ENCODE measurements at regions of chr1 and their contacts with region 1.

Region 1: DNA sequence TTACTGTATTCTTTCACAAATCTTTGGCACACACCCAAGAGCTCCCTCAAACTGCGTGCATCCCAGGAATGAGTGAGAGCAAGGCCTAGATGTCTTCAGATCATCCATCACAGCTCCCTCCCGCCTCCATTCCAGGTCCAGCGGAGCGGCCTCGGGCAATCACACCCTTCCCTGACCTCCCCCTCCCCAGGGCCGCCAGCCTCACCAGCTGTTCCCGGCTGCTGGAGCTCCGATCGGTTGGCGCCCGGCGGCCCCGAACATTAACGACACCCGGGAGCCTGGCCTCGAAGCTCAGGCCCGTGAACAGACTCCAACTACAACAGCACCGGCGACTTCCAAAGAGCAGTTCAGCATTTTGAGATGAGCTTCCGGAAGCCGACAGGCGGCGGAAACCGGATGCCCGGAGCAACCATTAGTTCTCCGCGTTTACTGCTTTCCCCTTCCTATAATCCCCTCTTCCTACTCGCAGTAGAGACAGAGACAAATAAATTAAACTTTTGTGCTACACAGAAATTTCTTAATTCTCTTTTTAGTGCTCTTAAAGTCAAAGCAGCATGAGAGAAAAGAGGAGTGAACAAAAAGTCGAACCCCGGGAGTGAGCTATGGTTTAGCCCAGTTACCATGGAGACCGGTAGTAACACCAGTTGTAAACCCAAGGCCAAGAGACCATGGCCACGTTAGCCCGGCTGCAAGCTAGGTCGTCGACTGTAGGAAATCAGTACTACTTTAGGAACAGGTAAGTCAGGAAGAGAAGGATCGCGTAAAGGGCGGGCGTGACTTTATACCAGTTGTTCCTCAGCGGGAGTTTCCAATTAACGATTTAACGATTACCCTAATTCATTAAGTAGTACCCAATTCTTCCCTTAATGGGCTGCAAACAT is at the starts of genes GPATCH2 and SPATA17:
- DNase-seq: peak; percentile 90
- H3K4me3 ChIP-seq: peak within 1 kb of the TSS; percentile 70 to 78 (median 71)
- H3K27ac ChIP-seq: peak within 1 kb of the TSS; percentile 98
- H3K4me1 ChIP-seq: peaks cover 22% of the 10 kb centered on the region
- H3K27me3 ChIP-seq: no peaks in the 10 kb centered on the region
- CTCF ChIP-seq: no peak
- POLR2A ChIP-seq: peak; percentile 91
- total RNA-seq, gene GPATCH2: 12.4 and 15.6 TPM in 2 replicates
- total RNA-seq, gene SPATA17: not detected in 2 replicates

Region 2: DNA sequence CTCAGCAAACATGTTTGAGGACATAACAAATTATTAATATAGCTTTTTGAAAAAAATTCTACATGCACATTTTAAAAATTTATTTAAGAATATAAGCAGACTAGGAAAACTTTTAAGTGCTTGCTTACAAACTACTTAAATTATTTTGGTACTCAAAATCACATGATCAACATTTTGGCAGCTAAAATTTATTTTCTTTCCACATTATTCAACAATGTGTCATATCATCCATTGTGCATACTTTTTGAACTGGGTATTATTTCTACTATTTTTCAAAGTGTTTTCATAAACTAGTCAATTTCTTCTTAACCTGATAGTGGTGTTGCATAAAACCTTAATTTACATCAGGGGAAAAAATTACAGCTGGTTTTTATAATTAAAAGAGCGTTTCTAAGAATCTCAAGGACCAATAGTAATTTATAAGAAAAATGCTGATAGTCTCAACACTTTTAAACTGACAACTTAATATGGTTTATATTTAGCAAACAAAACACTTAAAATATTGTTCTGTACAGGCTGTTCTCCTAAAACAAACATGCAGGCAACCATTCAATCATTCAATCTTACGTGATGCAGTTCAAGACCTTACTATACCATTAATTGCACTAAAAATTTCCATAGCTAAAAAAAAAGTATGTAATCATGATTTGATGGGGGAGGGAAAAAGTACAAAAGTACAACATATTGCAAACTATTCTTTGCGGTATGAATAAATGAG is 105.0 kb before region 1 on chr1:
- CTCF ChIA-PET with region 1: no interaction called
- POLR2A ChIA-PET with region 1: no interaction called
- dilution Hi-C with region 1: no loop called
- intact Hi-C with region 1: loop called (anchors 2 kb)
- DNase-seq: peak; percentile 63
- H3K4me3 ChIP-seq: no peak overlapping the region
- H3K27ac ChIP-seq: peak overlapping the region; percentile 41
- H3K4me1 ChIP-seq: peaks cover 19% of the 10 kb centered on the region
- H3K27me3 ChIP-seq: no peaks in the 10 kb centered on the region
- CTCF ChIP-seq: no peak
- POLR2A ChIP-seq: no peak